Caco-2 (cell line): ENCODE measurements at regions of chr11 and their contacts with region 1.

Region 1: DNA sequence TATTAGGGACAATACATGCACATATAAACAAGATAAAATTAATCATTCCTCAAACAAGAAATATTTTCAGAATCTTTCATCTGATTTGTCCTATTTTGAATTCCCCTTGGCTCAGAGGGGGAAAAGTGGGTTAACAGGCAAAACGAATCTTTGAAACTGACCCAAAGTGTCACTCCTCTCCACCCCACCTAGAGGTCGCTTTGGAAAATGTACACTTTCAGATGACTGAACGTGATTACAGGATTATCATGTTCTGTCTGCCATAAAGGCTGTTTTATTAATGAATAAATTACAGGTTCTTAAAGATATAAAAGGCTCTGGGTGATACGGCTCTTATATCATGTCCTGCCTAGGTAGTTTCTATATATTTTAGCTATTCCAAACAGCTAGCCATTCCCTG is 1735.0 kb downstream of the LRRC4C start:
- DNase-seq: peak in 1 of 2 experiments; percentile 34
- H3K4me3 ChIP-seq: no peak overlapping the region
- H3K4me3 Mint-ChIP-seq: no peak overlapping the region
- H3K27ac Mint-ChIP-seq: no peak overlapping the region
- H3K4me1 ChIP-seq: peaks cover 14% of the 10 kb centered on the region
- H3K4me1 Mint-ChIP-seq: peaks cover 23% of the 10 kb centered on the region
- H3K27me3 ChIP-seq: no peaks in the 10 kb centered on the region
- H3K27me3 Mint-ChIP-seq: no peaks in the 10 kb centered on the region
- CTCF ChIP-seq: peak; percentile 29 to 55

Region 2: GRCh38 chr11:39741066-39741465 is 16.7 kb after region 1 on chr11:
- CTCF ChIA-PET with region 1: no interaction called
- POLR2A ChIA-PET with region 1: no interaction called
- intact Hi-C with region 1: loop called (anchors 1 kb)
- DNase-seq: peak; percentile 51 to 75
- H3K4me3 ChIP-seq: no peak overlapping the region
- H3K4me3 Mint-ChIP-seq: no peak overlapping the region
- H3K27ac Mint-ChIP-seq: no peak overlapping the region
- H3K4me1 ChIP-seq: peaks cover 20% of the 10 kb centered on the region
- H3K4me1 Mint-ChIP-seq: peaks cover 8% of the 10 kb centered on the region
- H3K27me3 ChIP-seq: no peaks in the 10 kb centered on the region
- H3K27me3 Mint-ChIP-seq: no peaks in the 10 kb centered on the region
- CTCF ChIP-seq: no peak